Pancreas (tissue), 10 donors: ENCODE measurements at regions of chr2 and their contacts with region 1.

Region 1: DNA sequence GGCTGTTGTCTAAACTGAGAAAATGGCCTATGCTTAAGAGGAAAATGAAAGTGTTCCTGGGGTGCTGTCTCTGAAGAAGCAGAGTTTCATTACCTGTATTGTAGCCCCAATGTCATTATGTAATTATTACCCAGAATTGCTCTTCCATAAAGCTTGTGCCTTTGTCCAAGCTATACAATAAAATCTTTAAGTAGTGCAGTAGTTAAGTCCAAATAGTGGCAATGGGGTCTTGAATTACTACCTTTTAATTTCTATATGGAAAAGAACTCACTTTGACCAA is 13.8 kb upstream of the ALLC start:
- DNase-seq: no peak
- ATAC-seq: no peak
- H3K4me3 ChIP-seq: no peak overlapping the region
- H3K27ac ChIP-seq: no peak overlapping the region
- H3K4me1 ChIP-seq: no peaks in the 10 kb centered on the region
- H3K27me3 ChIP-seq: no peaks in the 10 kb centered on the region
- CTCF ChIP-seq: no peak

Region 2: DNA sequence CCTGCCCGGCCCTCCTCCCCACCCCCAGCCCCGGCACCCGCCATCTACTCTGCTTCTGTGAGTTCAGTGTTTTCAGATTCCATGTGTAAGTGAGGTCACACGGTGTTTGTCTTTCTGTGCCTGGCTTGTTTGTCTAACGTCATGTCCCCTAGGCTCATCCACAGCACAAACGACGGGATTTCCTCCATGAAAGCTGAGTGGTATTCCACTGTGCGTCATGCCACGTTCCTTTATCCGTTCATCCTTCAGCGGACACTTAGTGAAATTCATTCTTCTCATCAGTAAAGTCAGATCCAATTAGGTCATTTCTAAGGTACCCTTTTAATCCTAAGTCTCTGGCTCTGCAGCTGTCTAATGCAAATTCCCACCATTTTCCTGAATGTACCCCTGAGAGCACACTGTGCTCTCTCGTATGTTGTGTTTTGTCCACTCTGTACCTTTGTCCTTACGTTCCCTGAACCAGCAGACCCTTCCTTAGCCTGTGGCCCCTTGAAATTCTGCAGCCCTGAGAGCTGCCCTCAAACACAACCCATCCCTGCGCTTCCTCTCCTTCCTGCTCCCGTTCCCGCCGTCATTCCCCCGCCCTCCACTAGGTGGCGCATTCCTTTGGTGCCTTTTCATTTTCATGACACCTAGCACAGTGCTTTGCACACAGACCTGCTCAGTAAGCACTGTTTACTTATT is 220.6 kb before region 1 on chr2:
- intact Hi-C with region 1: loop called in 1 of 3 experiments (anchors 10 kb)
- DNase-seq: peak; percentile 25 to 91 (median 62)
- ATAC-seq: peak; percentile 55 to 87 (median 67)
- H3K4me3 ChIP-seq: no peak overlapping the region
- H3K27ac ChIP-seq: no peak overlapping the region
- H3K4me1 ChIP-seq: no peaks in the 10 kb centered on the region
- H3K27me3 ChIP-seq: no peaks in the 10 kb centered on the region
- CTCF ChIP-seq: peak; percentile 88 to 98 (median 94)

Region 3: DNA sequence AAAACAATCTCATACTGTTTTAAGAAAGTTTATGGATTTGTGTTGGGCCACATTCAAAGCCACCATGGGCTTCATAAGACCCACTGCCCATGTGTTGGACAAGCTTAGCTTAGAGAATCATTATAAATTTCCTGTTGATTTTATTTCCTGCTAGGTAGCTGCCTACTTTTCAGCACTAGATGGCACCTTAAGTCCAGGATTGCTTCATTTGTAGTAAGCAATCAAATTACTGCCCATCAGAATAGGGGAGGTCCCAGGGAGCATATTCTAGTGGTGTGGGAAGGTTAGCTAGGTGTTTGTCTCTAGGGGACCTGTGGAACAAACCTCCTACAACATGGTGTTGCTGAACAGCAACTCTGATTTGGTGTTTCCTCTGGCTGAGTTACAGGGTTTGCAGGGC is 48.2 kb after region 1 on chr2:
- intact Hi-C with region 1: no loop called
- DNase-seq: no peak
- ATAC-seq: peak in 1 of 4 donors; percentile 32
- H3K4me3 ChIP-seq: no peak overlapping the region
- H3K27ac ChIP-seq: no peak overlapping the region
- H3K4me1 ChIP-seq: no peaks in the 10 kb centered on the region
- H3K27me3 ChIP-seq: peaks cover 0 to 6% (median 1%) of the 10 kb centered on the region in 4 donors
- CTCF ChIP-seq: no peak

Region 4: GRCh38 chr2:3738454-3738853 is 94.3 kb after region 1 on chr2:
- intact Hi-C with region 1: no loop called
- DNase-seq: no peak
- ATAC-seq: no peak
- H3K4me3 ChIP-seq: no peak overlapping the region
- H3K27ac ChIP-seq: no peak overlapping the region
- H3K4me1 ChIP-seq: no peaks in the 10 kb centered on the region
- H3K27me3 ChIP-seq: peaks cover 0 to 6% (median 0%) of the 10 kb centered on the region in 4 donors
- CTCF ChIP-seq: no peak